Activated B cell treated with CpG ODN at 0.5 μM for 24 hours (primary cell): ENCODE measurements at regions of chr1 and their contacts with region 1.

Region 1: GRCh38 chr1:17419626-17420328 is 19.7 kb downstream of the RCC2 start:
- DNase-seq: peak; percentile 75
- ATAC-seq: peak; percentile 74
- H3K4me3 Mint-ChIP-seq: no peak overlapping the region
- H3K27ac Mint-ChIP-seq: peak overlapping the region; percentile 46
- H3K4me1 Mint-ChIP-seq: no peaks in the 10 kb centered on the region
- H3K27me3 Mint-ChIP-seq: no peaks in the 10 kb centered on the region
- CTCF ChIP-seq: peak; percentile 100

Region 2: GRCh38 chr1:17439250-17440073 is 19.7 kb after region 1 on chr1 and contains the start of gene RCC2:
- CTCF ChIA-PET with region 1: no interaction called
- POLR2A ChIA-PET with region 1: interaction called, 6 read pairs
- intact Hi-C with region 1: loop called (anchors 1 kb)
- DNase-seq: peak; percentile 67
- ATAC-seq: peak; percentile 67
- H3K4me3 Mint-ChIP-seq: peak within 1 kb of the TSS; percentile 96
- H3K27ac Mint-ChIP-seq: peak within 1 kb of the TSS; percentile 98
- H3K4me1 Mint-ChIP-seq: peaks cover 39% of the 10 kb centered on the region
- H3K27me3 Mint-ChIP-seq: peaks cover 11% of the 10 kb centered on the region
- CTCF ChIP-seq: no peak
- total RNA-seq, gene RCC2: 79.4 and 85.1 TPM in 2 replicates

Region 3: DNA sequence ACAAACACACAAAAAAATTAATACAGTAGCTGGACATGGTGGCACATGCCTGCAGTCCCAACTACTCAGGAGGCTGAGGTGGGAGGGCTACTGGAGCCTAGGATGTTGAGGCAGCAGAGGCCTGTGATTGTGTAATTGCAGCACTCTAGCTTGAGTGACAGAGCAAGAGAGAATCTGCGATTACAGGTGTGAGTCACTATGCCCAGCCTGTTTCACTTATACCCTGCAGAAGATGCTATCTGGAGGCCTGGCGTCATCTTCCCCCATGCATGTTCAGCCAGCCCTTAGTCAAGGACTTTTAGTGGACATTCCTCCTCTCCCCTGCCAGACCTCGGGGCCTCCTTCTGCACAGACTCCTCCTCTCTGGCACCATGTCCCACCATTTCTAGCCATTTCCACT is 56.0 kb after region 1 on chr1:
- CTCF ChIA-PET with region 1: no interaction called
- POLR2A ChIA-PET with region 1: no interaction called
- intact Hi-C with region 1: loop called (anchors 2 kb)
- DNase-seq: no peak
- ATAC-seq: no peak
- H3K4me3 Mint-ChIP-seq: no peak overlapping the region
- H3K27ac Mint-ChIP-seq: no peak overlapping the region
- H3K4me1 Mint-ChIP-seq: no peaks in the 10 kb centered on the region
- H3K27me3 Mint-ChIP-seq: no peaks in the 10 kb centered on the region
- CTCF ChIP-seq: no peak

Region 4: GRCh38 chr1:17485280-17485679 is 65.5 kb after region 1 on chr1:
- CTCF ChIA-PET with region 1: no interaction called
- POLR2A ChIA-PET with region 1: no interaction called
- intact Hi-C with region 1: loop called (anchors 2 kb)
- DNase-seq: no peak
- ATAC-seq: no peak
- H3K4me3 Mint-ChIP-seq: no peak overlapping the region
- H3K27ac Mint-ChIP-seq: no peak overlapping the region
- H3K4me1 Mint-ChIP-seq: no peaks in the 10 kb centered on the region
- H3K27me3 Mint-ChIP-seq: peaks cover 11% of the 10 kb centered on the region
- CTCF ChIP-seq: no peak

Region 5: DNA sequence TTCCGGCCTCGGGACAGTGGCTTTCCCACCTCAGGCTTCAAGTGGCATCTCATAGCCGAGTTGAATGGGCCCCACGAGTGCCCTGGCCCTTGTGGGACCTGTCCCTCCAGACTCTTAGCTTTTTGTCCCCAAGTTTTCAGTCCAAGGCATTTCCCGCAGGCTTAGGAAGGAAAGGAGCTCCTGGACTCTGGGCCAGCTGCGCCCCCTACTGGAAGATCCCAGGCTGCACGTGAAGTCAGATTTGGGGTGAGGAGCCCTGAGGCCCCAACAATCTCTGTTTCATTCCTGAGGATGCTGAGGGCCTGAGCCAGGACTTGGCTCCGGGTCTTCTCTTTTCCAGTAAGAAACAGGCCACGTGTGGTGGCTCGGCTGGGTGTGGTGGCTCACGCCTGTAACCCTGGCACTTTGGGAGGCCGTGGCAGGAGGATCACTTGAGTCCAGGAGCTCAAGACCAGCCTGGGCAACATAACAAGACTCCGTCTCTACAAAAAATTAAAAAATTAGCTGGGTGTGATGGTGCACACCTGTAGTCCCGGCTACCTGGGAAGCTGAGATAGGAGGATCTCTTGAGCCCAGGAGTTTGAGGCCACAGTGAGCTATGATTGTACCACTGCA is 187.2 kb after region 1 on chr1:
- CTCF ChIA-PET with region 1: interaction called, 4 read pairs
- POLR2A ChIA-PET with region 1: no interaction called
- intact Hi-C with region 1: loop called (anchors 2 kb)
- DNase-seq: peak; percentile 26
- ATAC-seq: no peak
- H3K4me3 Mint-ChIP-seq: no peak overlapping the region
- H3K27ac Mint-ChIP-seq: no peak overlapping the region
- H3K4me1 Mint-ChIP-seq: no peaks in the 10 kb centered on the region
- H3K27me3 Mint-ChIP-seq: no peaks in the 10 kb centered on the region
- CTCF ChIP-seq: no peak